ENCODE measurements at regions of chr2 and their contacts with region 1.

Region 1: GRCh38 chr2:101697124-101698013 is at the start of gene MAP4K4:
- DNase-seq: peak; percentile 89 to 95 (median 94)
- ATAC-seq: peak; percentile 92 to 93
- H3K4me3 ChIP-seq: peak within 1 kb of the TSS; percentile 98
- H3K27ac ChIP-seq: peak within 1 kb of the TSS; percentile 87
- H3K4me1 ChIP-seq: peaks cover 2% of the 10 kb centered on the region
- H3K27me3 ChIP-seq: no peaks in the 10 kb centered on the region
- total RNA-seq, gene MAP4K4: 56.4 to 64.5 (median 61.8) TPM

Region 2: GRCh38 chr2:101518578-101519492 is 178.5 kb before region 1 on chr2:
- intact Hi-C with region 1: loop called in 2 of 4 experiments (anchors 10 kb)
- DNase-seq: peak in 2 of 3 donors; percentile 69 to 72
- ATAC-seq: peak; percentile 69 to 77
- H3K4me3 ChIP-seq: no peak overlapping the region
- H3K27ac ChIP-seq: no peak overlapping the region
- H3K4me1 ChIP-seq: no peaks in the 10 kb centered on the region
- H3K27me3 ChIP-seq: no peaks in the 10 kb centered on the region

Region 3: DNA sequence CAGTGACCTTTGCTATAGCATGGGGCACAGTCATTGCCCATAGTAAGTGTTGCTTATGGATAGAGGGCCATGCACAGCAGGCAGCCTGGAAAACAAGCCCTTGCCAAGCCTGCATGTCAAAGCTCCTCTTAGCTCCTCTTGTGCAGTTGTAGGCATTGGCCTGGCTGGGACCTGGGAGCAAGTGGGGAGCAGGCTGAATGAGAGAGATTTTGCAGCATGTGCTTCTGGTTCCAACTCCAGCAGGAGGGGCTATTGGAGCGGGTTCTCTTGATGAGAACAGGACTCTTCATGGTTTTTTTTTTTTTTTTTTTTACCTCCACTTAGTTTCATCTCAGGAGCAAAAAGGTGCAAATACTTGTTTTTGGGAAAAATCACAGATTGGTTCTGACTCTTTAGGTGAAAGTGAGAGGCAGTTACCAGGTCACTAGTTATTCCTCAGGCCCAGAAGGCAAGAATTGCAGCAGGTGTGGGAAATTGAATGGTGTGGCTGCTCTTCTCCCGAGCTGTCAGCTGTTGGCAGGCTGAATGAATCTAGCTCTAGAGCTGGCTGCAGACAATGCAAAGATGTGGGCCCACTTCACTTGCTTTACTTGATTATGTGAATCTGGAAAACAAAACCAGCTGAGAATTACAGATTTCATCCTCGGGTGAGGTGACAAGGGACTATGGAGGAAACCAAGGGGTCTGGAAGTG is 96.1 kb after region 1 on chr2:
- intact Hi-C with region 1: no loop called
- DNase-seq: no peak
- ATAC-seq: peak in 1 of 2 donors; percentile 22
- H3K4me3 ChIP-seq: no peak overlapping the region
- H3K27ac ChIP-seq: no peak overlapping the region
- H3K4me1 ChIP-seq: peaks cover 8% of the 10 kb centered on the region
- H3K27me3 ChIP-seq: no peaks in the 10 kb centered on the region

Measured in right cardiac atrium (tissue), 5 donors.